Activated T-helper 2 cell treated with anti-CD3 and anti-CD28 coated beads, Interferon-gamma antibody, Interleukin-2, Interleukin-4, amounts not matched to agents 10 μg/mL and 5 μg/mL and 100 μg/mL, durations not matched to agents 14 hours and 24 hours and 36 hours (primary cell): ENCODE measurements at regions of chr14 and their contacts with region 1.

Region 1: DNA sequence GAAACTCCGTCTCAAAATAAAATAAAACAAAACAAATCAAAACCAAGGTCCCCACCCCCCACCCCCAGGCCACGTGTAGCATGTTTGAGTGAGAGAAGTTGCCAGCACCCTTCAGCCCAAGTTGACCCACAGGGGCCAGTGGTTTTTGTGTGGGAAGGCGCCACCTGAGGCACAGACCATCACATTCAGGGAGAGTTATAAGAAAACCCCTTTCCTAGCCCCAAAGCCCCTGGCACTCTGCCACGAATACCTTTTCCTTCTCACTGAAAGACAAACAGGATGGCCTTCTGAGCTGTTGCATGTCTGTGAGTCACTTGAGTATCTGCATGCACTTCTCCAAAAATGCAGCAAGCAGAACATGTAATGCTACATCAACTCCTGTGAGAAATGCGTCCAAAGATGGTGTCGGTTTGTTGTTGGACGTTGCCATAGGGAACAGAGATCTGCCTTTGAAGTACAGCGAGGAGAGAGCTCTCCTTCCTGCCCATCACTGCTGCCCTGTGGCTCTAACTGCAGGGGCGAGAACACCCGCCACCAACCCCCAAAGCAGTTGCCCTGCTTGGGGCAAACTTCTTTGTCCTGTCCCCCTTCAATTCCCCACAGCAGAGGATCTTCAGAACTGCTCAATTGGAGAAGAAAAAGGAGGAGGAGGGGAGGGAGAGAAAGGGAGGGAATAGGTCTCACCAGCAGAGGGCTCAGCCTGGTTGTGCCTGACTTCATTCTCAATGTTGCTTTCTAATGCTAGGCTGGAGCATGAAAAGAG is 2.7 kb upstream of the TRAF3 start:
- DNase-seq: peak; percentile 52
- H3K4me3 Mint-ChIP-seq: no peak overlapping the region
- H3K27ac Mint-ChIP-seq: peak overlapping the region; percentile 84
- H3K4me1 Mint-ChIP-seq: peaks cover 30% of the 10 kb centered on the region
- H3K27me3 Mint-ChIP-seq: no peaks in the 10 kb centered on the region

Region 2: DNA sequence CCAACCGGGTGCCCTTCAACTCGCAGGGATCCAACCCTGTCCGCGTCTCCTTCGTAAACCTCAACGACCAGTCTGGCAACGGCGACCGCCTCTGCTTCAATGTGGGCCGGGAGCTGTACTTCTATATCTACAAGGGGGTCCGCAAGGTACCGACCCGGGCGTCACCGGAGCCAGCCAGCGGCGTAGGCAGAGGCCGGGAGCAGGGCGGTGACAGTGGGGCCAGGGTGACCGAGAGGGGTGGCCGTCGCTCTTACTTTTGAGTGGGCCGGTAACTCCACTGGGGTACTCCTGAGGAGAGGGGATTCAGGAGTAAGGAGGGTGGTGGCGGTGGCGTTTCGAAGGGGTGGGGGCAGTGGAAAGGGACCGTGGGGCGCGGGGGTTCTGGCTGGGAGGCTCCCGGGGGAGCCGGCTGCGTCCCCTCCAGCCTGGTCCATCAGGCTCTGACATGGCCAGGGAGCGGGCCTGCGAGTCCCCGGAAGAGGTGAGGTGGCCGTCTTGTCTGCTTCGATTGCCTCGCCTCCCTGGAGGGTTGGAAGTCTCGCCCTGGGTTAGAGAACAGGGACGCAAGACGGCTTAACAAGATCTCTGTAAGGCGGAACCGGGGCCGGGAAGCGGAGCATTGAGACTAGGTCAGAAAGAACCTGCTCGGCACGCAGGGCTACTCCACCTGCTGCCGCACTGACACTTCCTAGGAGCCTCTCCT is 634.4 kb before region 1 on chr14:
- intact Hi-C with region 1: no loop called
- DNase-seq: peak; percentile 25
- H3K4me3 Mint-ChIP-seq: peak overlapping the region; percentile 94
- H3K27ac Mint-ChIP-seq: peak overlapping the region; percentile 94
- H3K4me1 Mint-ChIP-seq: peaks cover 20% of the 10 kb centered on the region
- H3K27me3 Mint-ChIP-seq: no peaks in the 10 kb centered on the region

Region 3: GRCh38 chr14:102591889-102592763 is 182.4 kb before region 1 on chr14 and contains the start of gene RCOR1:
- intact Hi-C with region 1: loop called (anchors 5 kb)
- DNase-seq: peak; percentile 97
- H3K4me3 Mint-ChIP-seq: peak within 1 kb of the TSS; percentile 91
- H3K27ac Mint-ChIP-seq: peak within 1 kb of the TSS; percentile 95
- H3K4me1 Mint-ChIP-seq: peaks cover 21% of the 10 kb centered on the region
- H3K27me3 Mint-ChIP-seq: no peaks in the 10 kb centered on the region
- total RNA-seq, gene RCOR1: 22.2 and 24.3 TPM in 2 replicates

Region 4: DNA sequence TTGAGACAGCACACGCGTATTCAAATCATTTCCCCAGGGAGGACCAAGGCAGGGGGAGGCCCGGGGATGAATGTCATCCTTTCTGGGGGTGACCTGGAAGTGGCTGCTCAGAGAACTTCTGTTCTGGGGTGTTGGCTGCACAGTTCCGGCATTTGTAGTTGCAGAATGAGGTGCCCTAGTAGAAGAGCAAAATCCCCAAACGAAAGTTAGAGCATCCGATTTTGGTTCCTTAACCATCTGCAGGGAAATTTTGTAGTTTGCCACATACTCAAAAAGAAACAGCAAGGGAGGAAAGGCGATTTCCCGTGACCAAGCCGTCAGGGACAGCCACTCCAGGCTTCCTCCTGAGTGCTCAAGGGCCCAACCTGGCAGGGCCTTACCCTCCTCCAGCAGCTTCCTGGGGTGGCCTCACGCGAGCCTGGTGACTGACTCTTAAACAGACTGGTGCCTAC is 10.3 kb before region 1 on chr14:
- intact Hi-C with region 1: no loop called
- DNase-seq: no peak
- H3K4me3 Mint-ChIP-seq: no peak overlapping the region
- H3K27ac Mint-ChIP-seq: no peak overlapping the region
- H3K4me1 Mint-ChIP-seq: peaks cover 7% of the 10 kb centered on the region
- H3K27me3 Mint-ChIP-seq: no peaks in the 10 kb centered on the region

Region 5: DNA sequence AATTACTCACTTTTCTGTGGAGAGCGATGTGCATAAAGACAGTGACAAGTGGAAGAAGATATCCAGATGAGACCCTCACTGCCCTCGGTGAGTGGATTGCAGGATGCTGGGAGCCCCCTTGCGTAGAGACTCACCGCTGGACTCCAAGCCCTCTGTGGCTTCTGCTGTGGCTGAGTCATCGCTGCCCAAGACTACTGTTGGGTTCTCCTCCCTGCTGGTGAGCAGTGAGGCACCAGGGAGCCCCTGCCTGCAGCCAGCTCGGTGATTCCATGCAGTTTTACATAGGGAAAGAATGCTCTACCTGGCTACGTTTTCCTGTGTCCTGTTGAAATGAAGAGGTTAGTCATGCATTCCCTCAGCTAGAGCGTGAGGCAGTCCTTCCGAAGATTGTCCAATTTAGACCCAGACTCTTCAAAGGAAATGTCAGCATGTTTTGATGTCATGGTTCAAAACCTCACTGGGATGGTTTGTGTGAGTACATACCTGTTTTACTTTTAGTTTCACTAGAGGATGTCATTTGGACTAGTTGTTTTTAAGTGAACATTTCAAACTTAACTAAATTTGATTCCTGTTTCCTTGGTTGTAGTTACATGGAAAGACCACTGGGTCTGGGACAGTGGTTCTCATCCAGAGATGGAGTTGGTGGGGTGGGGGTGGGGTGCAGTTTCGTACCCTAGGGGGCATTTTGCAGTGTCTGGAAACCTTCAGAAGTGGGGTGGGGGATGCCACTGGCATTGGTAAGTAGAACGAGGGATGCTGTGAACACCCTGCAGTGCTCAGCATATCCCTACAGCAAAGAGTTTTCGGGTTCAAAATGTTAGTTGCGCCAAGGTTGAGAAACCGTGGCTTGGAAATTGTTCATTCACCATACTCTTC is 31.0 kb after region 1 on chr14:
- intact Hi-C with region 1: loop called (anchors 1 kb)
- DNase-seq: peak; percentile 40
- H3K4me3 Mint-ChIP-seq: peak overlapping the region; percentile 66
- H3K27ac Mint-ChIP-seq: peak overlapping the region; percentile 92
- H3K4me1 Mint-ChIP-seq: peaks cover 50% of the 10 kb centered on the region
- H3K27me3 Mint-ChIP-seq: no peaks in the 10 kb centered on the region

Region 6: GRCh38 chr14:102831163-102831804 is 56.7 kb after region 1 on chr14:
- intact Hi-C with region 1: loop called (anchors 2 kb)
- DNase-seq: no peak
- H3K4me3 Mint-ChIP-seq: peak overlapping the region; percentile 31
- H3K27ac Mint-ChIP-seq: peak overlapping the region; percentile 85
- H3K4me1 Mint-ChIP-seq: peaks cover 50% of the 10 kb centered on the region
- H3K27me3 Mint-ChIP-seq: no peaks in the 10 kb centered on the region

Region 7: GRCh38 chr14:102917469-102918211 is 143.1 kb after region 1 on chr14:
- intact Hi-C with region 1: loop called (anchors 1 kb)
- DNase-seq: peak; percentile 28
- H3K4me3 Mint-ChIP-seq: no peak overlapping the region
- H3K27ac Mint-ChIP-seq: no peak overlapping the region
- H3K4me1 Mint-ChIP-seq: no peaks in the 10 kb centered on the region
- H3K27me3 Mint-ChIP-seq: no peaks in the 10 kb centered on the region

Region 8: DNA sequence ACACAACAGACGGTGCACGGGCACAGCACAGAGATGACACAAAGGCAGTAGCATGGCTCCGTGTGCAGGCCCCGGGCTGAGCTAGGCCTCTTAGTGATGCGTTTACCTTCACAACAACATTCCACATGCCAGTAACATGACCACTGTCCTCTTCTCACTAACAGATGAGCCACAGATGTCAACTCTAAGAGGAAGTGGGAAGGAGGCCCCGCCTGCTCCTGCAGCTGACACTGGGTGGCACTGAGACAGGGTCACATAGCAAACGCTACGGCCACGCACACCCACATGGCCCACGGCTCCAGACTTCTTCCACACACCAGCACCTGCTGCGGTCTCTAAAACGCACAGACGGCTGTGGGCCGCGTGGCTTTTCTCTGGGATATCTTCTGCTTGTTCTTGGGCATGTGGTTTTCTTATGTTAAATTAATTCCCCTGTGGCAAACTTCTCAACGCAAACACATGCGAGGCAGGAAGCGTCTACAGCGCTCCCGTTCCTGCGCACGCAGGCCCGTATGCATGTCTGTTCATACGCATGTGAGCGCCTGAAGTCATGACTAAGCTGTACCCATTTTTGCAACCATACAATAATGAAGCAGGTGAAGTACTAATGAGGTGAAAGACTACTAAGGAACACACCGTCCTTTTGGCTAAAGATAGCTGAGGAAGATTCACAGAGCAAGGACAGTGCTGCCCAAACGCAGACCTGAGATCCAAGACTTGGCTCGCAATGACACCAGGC is 174.7 kb after region 1 on chr14:
- intact Hi-C with region 1: no loop called
- DNase-seq: peak; percentile 19
- H3K4me3 Mint-ChIP-seq: no peak overlapping the region
- H3K27ac Mint-ChIP-seq: peak overlapping the region; percentile 48
- H3K4me1 Mint-ChIP-seq: peaks cover 17% of the 10 kb centered on the region
- H3K27me3 Mint-ChIP-seq: no peaks in the 10 kb centered on the region